ENCODE measurements at regions of chr2 and their contacts with region 1.

Region 1: DNA sequence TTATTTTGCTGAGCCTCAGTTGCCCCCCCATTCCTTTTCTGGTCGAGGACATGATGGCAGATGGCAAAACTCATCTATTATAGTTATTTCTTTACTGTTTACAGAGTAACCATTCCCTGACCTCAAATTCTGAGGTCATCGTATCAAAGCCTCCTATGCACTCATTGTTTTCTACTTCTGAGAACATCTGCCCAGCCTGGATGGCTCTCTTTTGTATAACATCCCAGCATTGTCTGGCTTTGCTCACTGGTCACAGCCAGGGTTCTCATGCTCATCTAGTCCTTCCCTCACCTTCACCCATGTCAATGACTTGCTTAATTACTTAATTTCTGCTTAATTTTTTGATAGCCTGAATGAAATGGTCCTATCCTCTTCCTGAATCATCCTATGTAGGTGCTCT is 472.1 kb downstream of the PARD3B start:
- DNase-seq: no peak
- H3K4me3 ChIP-seq: no peak overlapping the region
- H3K27ac ChIP-seq: no peak overlapping the region
- H3K4me1 ChIP-seq: no peaks in the 10 kb centered on the region
- H3K27me3 ChIP-seq: no peaks in the 10 kb centered on the region
- CTCF ChIP-seq: no peak
- POLR2A ChIP-seq: no peak

Region 2: DNA sequence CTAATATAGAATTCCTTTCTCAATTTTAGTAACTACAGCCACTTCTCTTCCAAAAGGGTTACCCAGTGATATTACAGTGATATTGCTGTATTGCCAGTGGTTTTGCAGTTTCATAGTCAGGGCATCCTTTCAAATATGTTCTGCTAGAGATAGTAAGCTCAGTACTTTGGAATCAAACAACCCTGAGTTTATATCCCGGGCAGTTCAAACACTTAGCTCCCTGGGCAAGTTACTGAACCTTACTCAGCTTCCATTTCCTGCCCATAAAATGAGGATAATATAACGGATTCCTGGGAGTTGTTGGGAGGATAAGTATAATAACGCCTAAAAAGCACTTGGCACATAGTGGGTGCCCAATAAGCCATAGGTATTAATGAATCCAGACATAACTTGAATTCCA is 684.7 kb before region 1 on chr2:
- intact Hi-C with region 1: loop called (anchors 5 kb)
- DNase-seq: no peak
- H3K4me3 ChIP-seq: no peak overlapping the region
- H3K27ac ChIP-seq: no peak overlapping the region
- H3K4me1 ChIP-seq: no peaks in the 10 kb centered on the region
- H3K27me3 ChIP-seq: no peaks in the 10 kb centered on the region
- CTCF ChIP-seq: no peak
- POLR2A ChIP-seq: no peak

Region 3: DNA sequence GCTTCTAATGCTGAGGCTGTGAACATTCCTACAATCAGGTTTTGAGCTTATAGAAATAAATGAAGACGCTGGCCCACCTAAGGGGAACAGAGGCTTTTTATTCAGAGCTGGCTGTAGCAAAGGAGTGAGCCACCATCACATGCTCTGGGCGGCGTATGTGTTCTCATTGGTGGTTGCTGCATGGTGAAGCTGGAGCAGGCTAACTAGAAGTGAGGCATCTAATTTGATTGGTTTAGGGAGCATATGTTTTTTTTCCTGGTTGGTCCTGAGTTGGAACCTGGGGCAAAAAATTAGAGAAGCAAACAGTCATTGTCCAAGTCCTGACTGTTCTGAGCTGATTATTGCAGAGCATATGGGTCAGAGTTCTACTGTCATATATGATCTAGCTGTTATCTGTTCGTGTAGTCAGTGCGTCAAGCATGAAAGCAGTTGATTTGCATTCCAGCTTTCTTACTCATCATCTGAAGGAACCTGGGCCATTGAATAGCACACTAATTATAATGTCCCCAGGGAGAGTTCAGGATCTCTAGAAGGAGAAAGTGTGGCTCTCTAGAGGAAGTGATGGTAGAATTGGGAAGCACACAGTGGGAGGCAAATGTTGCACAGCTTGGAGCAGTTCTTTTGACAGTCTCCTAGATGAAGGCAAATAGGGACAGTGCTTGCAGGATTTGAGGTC is 192.5 kb before region 1 on chr2:
- intact Hi-C with region 1: no loop called
- DNase-seq: no peak
- H3K4me3 ChIP-seq: no peak overlapping the region
- H3K27ac ChIP-seq: no peak overlapping the region
- H3K4me1 ChIP-seq: no peaks in the 10 kb centered on the region
- H3K27me3 ChIP-seq: no peaks in the 10 kb centered on the region
- CTCF ChIP-seq: no peak
- POLR2A ChIP-seq: no peak

Region 4: DNA sequence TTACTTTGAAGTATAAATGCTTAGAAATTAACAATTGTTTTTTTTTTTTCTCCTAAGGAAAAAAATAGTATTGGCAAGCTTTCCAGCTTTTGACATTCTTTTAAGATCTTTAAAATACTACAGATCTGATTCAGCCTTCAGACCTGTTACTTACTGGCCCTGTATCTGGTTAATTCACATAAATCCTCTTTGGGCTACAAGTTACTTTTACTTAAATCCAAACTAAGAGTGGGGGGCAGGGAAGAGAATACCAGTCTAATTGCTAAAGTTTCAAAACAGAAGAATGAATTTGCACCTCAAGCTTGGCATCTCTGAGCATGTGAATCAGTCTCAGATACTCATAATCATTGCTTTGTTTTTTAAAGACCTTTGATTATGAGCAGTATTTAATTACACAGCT is 85.8 kb before region 1 on chr2:
- intact Hi-C with region 1: no loop called
- DNase-seq: no peak
- H3K4me3 ChIP-seq: no peak overlapping the region
- H3K27ac ChIP-seq: no peak overlapping the region
- H3K4me1 ChIP-seq: no peaks in the 10 kb centered on the region
- H3K27me3 ChIP-seq: no peaks in the 10 kb centered on the region
- CTCF ChIP-seq: no peak
- POLR2A ChIP-seq: no peak

Region 5: DNA sequence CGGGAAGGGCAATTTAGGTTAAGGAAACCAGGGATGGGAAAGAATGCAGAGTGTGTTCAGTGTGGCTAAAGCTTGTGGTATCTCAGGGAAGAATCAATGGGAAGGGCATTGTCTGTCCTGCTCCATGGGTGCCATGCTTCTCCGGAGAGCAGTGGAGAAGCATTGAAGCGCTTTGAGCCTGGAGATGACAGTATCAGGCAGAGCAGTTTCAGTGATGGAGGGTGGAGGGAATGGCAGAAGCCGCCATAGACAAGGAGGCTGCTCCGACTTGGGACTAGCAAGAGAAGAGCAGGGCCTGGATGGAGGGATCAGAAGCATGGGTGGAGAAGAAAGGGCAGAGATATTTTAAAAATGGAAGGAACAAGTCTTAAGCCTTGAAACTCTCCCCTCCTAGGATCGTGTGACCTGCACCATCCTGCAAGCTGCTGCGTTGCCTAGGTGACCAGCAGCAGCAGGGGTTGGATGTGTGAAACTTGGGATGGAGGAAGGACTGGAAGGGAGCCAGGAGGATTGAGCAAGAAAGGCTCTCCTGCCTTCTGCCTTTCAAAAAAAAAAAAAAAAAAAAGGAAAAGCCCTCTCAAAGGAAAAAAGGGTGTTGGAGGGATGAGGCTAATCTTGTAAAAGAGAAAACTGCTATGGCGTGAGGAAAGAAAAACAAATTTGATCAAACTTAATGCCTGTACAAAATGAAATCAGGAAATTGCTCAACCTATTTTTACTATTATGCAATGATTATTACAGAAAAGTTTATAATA is 171.0 kb after region 1 on chr2:
- intact Hi-C with region 1: loop called (anchors 5 kb)
- DNase-seq: no peak
- H3K4me3 ChIP-seq: no peak overlapping the region
- H3K27ac ChIP-seq: peak overlapping the region in 1 of 2 donors; percentile 39
- H3K4me1 ChIP-seq: no peaks in the 10 kb centered on the region
- H3K27me3 ChIP-seq: no peaks in the 10 kb centered on the region
- CTCF ChIP-seq: no peak
- POLR2A ChIP-seq: no peak

Region 6: GRCh38 chr2:205617905-205618304 is 600.5 kb after region 1 on chr2:
- intact Hi-C with region 1: no loop called
- DNase-seq: no peak
- H3K4me3 ChIP-seq: no peak overlapping the region
- H3K27ac ChIP-seq: no peak overlapping the region
- H3K4me1 ChIP-seq: no peaks in the 10 kb centered on the region
- H3K27me3 ChIP-seq: no peaks in the 10 kb centered on the region
- CTCF ChIP-seq: no peak
- POLR2A ChIP-seq: no peak

Region 7: GRCh38 chr2:205857520-205858237 is 840.3 kb after region 1 on chr2:
- intact Hi-C with region 1: no loop called
- DNase-seq: no peak
- H3K4me3 ChIP-seq: no peak overlapping the region
- H3K27ac ChIP-seq: no peak overlapping the region
- H3K4me1 ChIP-seq: no peaks in the 10 kb centered on the region
- H3K27me3 ChIP-seq: no peaks in the 10 kb centered on the region
- CTCF ChIP-seq: no peak
- POLR2A ChIP-seq: no peak